ENCODE measurements at regions of chr17 and their contacts with region 1.

Region 1: DNA sequence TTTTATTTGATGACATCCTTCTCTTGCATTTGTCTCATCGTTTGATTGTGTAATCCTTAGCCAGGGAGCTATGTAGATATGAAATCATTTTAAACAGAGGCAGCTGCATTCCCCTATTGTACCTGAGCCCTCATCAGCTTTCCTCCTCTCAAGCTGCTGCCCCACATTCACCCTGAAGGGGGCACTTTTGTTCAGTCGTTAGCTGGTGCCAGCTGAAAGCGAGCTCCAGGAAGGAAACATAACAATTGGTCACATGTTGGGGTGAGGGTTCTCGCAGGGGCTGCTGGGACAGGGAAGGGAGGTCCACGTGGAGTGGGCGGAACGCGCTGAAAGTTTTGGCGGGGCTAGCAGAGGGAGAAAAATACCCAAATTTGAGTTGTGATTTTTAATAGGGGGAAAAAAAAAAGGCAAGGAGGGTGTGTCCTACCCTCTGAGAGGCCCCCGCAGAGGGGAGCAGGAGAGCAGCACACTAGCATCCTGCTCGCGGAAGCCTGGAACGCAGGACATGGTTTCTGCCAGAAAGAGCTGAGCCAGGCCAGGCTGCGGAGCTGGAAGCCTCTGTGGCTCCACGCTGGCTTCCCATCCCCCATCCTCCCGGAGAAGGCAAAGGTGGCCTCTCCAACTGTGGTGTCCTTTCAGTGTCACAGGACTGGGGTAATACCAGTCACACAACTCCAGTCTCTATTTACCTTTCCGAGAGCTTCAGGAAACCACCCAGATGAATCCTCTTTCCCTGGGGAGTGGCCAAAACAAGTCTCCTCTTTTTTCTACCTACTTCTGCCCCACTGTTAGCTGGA is 8.5 kb upstream of the MSL1 start:
- DNase-seq: peak; percentile 77
- H3K4me3 ChIP-seq: peak overlapping the region; percentile 51
- CTCF ChIP-seq: peak; percentile 87

Region 2: DNA sequence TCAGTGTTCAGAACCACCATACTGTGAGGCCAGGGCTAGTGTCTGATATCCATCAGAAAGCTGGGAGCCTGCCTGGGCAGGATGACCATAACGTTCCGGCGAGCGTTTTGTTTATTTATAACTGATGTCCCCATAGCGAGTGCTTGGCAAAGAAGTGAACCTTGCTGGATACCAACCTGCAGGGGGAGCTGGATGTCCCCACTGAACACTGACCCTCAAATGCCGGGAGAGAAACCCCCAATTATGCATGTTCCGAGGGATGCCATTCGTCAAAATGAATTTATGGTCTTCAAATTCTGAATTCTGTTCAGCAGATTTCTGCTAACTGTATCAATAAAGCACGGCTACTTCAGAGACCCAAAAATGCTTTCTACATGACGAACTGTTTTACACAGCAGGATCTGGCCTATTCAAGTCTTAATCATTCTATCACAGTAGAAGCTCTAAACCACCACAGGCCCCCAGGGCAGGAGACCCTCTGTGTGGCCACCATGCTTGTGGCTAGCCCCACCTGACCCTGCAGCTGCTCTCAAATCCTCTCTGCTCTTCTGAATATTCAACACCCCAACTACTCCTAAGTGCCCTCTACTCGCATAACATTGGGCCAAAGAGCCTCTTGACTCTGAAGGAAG is 74.3 kb before region 1 on chr17:
- CTCF ChIA-PET with region 1: interaction called, 71 read pairs
- POLR2A ChIA-PET with region 1: interaction called, 3 read pairs
- DNase-seq: peak; percentile 42
- H3K4me3 ChIP-seq: no peak overlapping the region
- CTCF ChIP-seq: peak; percentile 79

Region 3: DNA sequence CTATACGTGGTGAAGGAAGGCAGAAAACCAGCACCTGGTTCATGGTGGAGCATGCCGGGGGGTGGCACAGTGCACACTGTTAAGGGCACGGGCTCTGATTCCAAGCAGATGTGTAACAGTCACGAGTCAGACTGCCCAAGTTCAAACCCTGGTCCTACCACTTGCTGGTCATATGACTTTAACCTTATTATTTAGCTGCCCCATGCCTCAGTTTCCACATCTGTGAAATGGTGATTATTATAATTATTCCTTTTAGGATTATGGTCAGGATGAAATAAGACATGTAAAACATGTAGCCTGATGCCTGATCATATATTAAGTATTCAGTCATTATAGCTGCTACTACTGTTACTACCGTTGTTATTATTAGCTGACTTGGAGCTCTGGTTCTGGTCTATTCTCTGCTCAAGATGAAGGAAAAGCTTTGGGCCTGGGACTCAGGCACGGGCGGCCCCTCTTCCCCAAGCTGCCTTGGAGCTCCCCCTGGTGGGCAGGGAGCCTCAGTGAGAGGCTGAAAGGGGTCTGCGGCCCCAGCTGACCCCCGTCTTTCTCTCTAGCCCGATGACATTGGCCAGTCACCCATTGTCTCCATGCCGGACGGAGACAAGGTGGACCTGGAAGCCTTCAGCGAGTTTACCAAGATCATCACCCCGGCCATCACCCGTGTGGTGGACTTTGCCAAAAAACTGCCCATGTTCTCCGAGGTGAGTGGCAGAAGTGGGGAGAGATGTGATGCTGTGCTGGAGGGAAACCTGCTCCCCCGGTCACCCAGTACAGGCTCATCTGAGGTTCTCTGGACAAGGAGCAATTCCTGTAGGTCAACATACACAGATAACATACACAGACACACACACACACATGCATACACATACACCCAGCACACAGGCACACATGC is 26.9 kb before region 1 on chr17:
- CTCF ChIA-PET with region 1: interaction called, 12 read pairs
- POLR2A ChIA-PET with region 1: interaction called, 3 read pairs
- DNase-seq: no peak
- H3K4me3 ChIP-seq: no peak overlapping the region
- CTCF ChIP-seq: peak; percentile 75

Region 4: DNA sequence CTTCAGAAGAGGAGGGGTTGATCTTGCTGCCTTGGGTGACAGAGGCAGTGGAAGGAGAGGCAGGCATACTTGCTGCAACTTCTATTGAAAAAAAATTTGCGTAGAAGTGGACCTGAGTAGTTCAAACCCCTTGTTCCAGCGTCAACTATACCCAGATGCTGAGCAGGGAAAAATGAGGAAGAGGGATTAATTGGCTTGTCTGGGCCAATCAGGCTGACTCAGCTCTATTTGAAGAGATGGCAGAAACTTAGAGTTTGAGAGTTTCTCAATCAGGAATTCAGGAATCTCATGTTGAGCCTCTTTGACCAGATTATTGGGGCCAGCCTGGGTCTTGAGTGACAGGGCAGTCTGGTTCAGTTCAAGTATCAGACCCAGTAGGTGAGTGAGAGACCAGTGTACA is 44.7 kb after region 1 on chr17:
- CTCF ChIA-PET with region 1: interaction called, 11 read pairs
- POLR2A ChIA-PET with region 1: no interaction called
- DNase-seq: no peak
- H3K4me3 ChIP-seq: no peak overlapping the region
- CTCF ChIP-seq: no peak

Region 5: DNA sequence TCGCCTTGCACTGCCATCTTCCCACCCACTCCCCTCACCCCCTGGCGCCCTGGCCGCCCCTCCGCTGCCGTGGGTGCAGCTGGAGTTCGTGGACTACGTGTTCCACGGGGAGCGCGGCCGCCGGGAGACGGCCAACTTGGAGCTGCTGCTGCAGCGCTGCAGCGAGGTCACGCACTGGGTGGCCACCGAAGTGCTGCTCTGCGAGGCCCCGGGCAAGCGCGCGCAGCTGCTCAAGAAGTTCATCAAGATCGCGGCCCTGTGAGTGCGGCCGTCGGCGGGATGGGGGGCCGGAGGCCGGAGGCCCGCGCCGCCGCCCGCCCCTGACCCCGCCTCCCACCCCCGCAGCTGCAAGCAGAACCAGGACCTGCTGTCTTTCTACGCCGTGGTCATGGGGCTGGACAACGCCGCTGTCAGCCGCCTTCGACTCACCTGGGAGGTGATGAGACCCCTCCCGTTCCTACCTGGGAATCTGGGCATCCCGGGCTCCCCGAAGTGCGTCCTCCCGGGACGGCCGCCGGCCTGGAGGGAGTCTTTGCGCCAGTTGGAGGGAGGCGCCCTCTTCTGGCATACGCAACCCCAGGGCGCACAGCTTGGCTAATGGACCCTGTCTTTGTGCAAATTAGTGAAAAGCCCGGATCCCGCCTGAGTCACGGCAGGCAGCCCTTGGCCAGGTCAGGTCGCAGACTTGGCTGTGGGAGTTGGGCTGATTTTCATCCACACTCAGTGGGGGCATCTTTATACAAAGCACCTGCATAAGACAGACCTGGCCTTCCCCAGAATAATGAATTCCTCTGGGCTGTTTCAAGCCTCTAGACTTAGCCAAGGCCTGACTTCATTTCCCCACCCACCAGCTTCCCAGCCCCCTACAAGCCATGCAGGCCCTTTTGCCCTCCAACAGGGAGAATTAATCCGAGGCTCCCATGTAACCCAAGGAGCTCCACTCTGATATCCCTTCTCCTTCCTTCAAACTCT is 78.2 kb after region 1 on chr17:
- CTCF ChIA-PET with region 1: interaction called, 49 read pairs
- POLR2A ChIA-PET with region 1: interaction called, 3 read pairs
- DNase-seq: no peak
- H3K4me3 ChIP-seq: peak overlapping the region; percentile 66
- CTCF ChIP-seq: peak; percentile 89

Region 6: GRCh38 chr17:40253565-40253964 is 140.3 kb after region 1 on chr17:
- CTCF ChIA-PET with region 1: no interaction called
- POLR2A ChIA-PET with region 1: no interaction called
- DNase-seq: no peak
- H3K4me3 ChIP-seq: no peak overlapping the region
- CTCF ChIP-seq: no peak